Activated CD8-positive, alpha-beta T cell treated with anti-CD3 and anti-CD28 coated beads for 36 hours (primary cell): ENCODE measurements at regions of chr5 and their contacts with region 1.

Region 1: GRCh38 chr5:16791036-16791705 is 144.9 kb downstream of the MYO10 start:
- DNase-seq: peak; percentile 35
- ATAC-seq: peak; percentile 69
- H3K4me3 Mint-ChIP-seq: no peak overlapping the region
- H3K27ac Mint-ChIP-seq: no peak overlapping the region
- H3K4me1 Mint-ChIP-seq: peaks cover 9% of the 10 kb centered on the region
- H3K27me3 Mint-ChIP-seq: peaks cover 1% of the 10 kb centered on the region
- CTCF ChIP-seq: peak; percentile 84

Region 2: DNA sequence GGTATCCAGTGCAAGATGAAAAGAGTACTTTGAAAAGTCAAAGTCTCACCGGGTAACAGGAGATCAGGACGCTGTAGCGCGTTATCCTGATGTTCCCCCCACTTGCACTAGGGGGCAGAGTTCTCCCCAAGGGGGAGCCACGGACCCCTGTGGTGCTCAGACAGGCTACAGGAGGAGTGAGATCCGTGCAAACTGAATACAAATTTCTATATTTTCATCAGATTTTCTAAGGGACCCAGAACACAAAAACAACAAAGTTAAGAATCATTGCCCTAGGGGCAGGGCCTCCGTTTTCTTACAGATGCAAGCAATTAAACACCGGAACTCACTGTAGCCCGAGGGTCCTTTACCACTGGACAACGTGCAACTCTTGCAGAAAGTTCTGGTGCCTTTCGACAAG is 143.0 kb after region 1 on chr5:
- CTCF ChIA-PET with region 1: no interaction called
- POLR2A ChIA-PET with region 1: no interaction called
- intact Hi-C with region 1: loop called (anchors 10 kb)
- DNase-seq: peak; percentile 59
- ATAC-seq: peak; percentile 66
- H3K4me3 Mint-ChIP-seq: no peak overlapping the region
- H3K27ac Mint-ChIP-seq: no peak overlapping the region
- H3K4me1 Mint-ChIP-seq: peaks cover 13% of the 10 kb centered on the region
- H3K27me3 Mint-ChIP-seq: peaks cover 60% of the 10 kb centered on the region
- CTCF ChIP-seq: peak; percentile 83

Region 3: DNA sequence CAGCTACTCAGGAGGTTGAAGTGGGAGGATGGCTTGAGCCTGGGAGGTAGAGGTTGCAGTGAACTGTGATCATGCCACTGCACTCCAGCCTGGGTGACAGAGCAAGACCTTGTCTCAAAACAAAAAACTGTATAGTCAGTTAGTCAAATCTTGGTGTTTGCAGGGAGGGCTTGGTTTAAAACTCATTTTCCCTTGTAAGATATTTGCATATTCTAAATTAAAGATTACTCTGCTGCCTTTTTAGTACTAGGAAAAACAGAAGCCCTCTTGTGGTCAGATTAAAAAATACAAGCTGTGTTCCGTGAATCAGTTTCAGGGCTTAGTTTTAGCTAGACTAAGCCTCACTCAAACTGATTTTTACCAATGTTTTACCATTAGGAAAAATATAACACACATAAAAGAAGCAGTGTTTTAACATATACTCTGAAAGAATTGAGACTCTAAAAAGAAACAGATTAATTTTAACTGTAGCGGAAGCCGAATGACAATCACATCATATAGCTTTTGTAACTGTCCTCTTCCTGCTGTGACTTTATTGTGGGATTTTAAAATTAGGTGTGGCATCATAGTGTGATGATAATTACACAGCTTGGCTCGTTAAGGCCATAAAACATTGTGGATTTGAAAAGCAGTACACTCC is 341.4 kb after region 1 on chr5:
- CTCF ChIA-PET with region 1: interaction called, 17 read pairs
- POLR2A ChIA-PET with region 1: no interaction called
- intact Hi-C with region 1: no loop called
- DNase-seq: no peak
- ATAC-seq: no peak
- H3K4me3 Mint-ChIP-seq: no peak overlapping the region
- H3K27ac Mint-ChIP-seq: no peak overlapping the region
- H3K4me1 Mint-ChIP-seq: peaks cover 4% of the 10 kb centered on the region
- H3K27me3 Mint-ChIP-seq: peaks cover 8% of the 10 kb centered on the region
- CTCF ChIP-seq: peak; percentile 75